B cell (primary cell): ENCODE measurements at regions of chr4 and their contacts with region 1.

Region 1: GRCh38 chr4:48578132-48578968 is 88.3 kb downstream of the ZAR1 start:
- DNase-seq: peak; percentile 70
- ATAC-seq: peak; percentile 86
- H3K4me3 ChIP-seq: no peak overlapping the region
- H3K4me3 Mint-ChIP-seq: no peak overlapping the region
- H3K27ac ChIP-seq: peak overlapping the region in 1 of 2 donors; percentile 2
- H3K27ac Mint-ChIP-seq: no peak overlapping the region
- H3K4me1 ChIP-seq: no peaks in the 10 kb centered on the region
- H3K4me1 Mint-ChIP-seq: peaks cover 1% of the 10 kb centered on the region
- H3K27me3 ChIP-seq: no peaks in the 10 kb centered on the region
- H3K27me3 Mint-ChIP-seq: no peaks in the 10 kb centered on the region
- CTCF ChIP-seq: peak; percentile 94

Region 2: GRCh38 chr4:48008021-48008596 is 570.2 kb before region 1 on chr4:
- CTCF ChIA-PET with region 1: no interaction called
- POLR2A ChIA-PET with region 1: no interaction called
- intact Hi-C with region 1: no loop called
- DNase-seq: no peak
- ATAC-seq: no peak
- H3K4me3 ChIP-seq: no peak overlapping the region
- H3K4me3 Mint-ChIP-seq: no peak overlapping the region
- H3K27ac ChIP-seq: no peak overlapping the region
- H3K27ac Mint-ChIP-seq: no peak overlapping the region
- H3K4me1 ChIP-seq: no peaks in the 10 kb centered on the region
- H3K4me1 Mint-ChIP-seq: no peaks in the 10 kb centered on the region
- H3K27me3 ChIP-seq: peaks cover 0 to 8% (median 4%) of the 10 kb centered on the region in 4 experiments
- H3K27me3 Mint-ChIP-seq: peaks cover 17% of the 10 kb centered on the region
- CTCF ChIP-seq: no peak

Region 3: GRCh38 chr4:48594180-48594579 is 15.8 kb after region 1 on chr4:
- CTCF ChIA-PET with region 1: interaction called, 19 read pairs
- POLR2A ChIA-PET with region 1: no interaction called
- intact Hi-C with region 1: no loop called
- DNase-seq: no peak
- ATAC-seq: no peak
- H3K4me3 ChIP-seq: no peak overlapping the region
- H3K4me3 Mint-ChIP-seq: no peak overlapping the region
- H3K27ac ChIP-seq: no peak overlapping the region
- H3K27ac Mint-ChIP-seq: no peak overlapping the region
- H3K4me1 ChIP-seq: no peaks in the 10 kb centered on the region
- H3K4me1 Mint-ChIP-seq: no peaks in the 10 kb centered on the region
- H3K27me3 ChIP-seq: no peaks in the 10 kb centered on the region
- H3K27me3 Mint-ChIP-seq: no peaks in the 10 kb centered on the region
- CTCF ChIP-seq: no peak

Region 4: DNA sequence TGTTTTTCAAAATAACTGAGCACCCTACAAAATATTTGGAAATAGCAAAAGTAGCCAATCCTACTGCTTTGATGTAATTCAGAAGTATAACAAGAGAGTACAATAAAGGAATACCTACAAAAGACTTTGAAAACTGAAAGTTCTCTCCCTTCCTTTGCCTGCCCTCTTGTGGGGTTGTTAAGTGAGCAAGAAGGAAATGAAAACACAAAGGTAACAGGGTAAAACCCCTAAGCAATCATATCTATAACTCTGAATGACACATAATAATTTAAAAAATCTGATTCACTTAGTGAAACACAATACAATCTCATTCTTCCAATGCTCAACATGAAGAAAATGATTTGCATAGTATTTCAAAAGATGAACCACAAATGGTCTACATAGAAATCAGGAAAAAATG is 103.5 kb after region 1 on chr4:
- CTCF ChIA-PET with region 1: interaction called, 36 read pairs
- POLR2A ChIA-PET with region 1: no interaction called
- intact Hi-C with region 1: loop called (anchors 1 kb)
- DNase-seq: peak; percentile 46
- ATAC-seq: no peak
- H3K4me3 ChIP-seq: no peak overlapping the region
- H3K4me3 Mint-ChIP-seq: no peak overlapping the region
- H3K27ac ChIP-seq: peak overlapping the region in 1 of 2 donors; percentile 16
- H3K27ac Mint-ChIP-seq: peak overlapping the region; percentile 37
- H3K4me1 ChIP-seq: peaks cover 6 to 20% of the 10 kb centered on the region in 2 donors
- H3K4me1 Mint-ChIP-seq: peaks cover 42% of the 10 kb centered on the region
- H3K27me3 ChIP-seq: no peaks in the 10 kb centered on the region
- H3K27me3 Mint-ChIP-seq: no peaks in the 10 kb centered on the region
- CTCF ChIP-seq: peak; percentile 54

Region 5: DNA sequence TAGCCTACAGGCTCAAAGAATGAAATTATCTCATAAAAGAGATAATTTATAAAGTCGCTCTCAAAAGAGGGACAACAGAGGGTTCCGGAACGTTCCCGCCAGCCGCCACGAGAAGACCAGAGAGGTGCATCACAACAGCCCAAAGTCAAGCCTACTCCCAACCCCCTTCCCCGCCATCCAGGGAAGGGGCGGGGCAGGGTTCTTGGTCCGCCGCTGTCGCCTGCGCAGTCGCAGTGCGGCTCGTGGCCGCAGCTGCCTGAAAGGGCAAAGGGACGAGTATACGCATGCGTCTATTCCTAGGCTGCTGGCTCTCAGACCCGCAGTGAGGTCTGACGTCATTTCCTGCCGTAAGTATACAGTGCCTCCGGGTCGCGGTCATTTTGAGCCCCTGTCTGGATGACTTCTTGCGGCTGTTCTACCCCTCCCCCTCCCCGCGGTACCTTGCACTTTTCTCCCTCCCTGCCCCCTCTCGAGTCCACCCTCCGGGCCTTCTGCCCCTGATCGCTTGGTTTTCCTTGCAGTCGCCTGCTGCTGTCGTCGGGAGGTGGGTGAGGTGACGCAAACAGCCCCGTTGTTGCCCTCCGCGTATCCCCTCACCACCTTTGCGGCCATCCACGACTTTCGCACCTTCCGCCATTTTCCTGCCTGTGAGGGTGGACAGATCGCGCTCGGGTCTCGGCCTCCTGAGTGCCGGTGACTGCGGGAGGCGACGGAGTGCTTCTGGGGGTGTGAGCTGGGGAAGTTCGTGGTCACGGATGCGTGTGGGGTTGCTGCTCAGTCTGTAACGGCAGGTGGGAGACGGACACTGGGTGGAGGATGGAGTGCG is 252.6 kb after region 1 on chr4 and contains the start of gene OCIAD1:
- CTCF ChIA-PET with region 1: interaction called, 3 read pairs
- POLR2A ChIA-PET with region 1: no interaction called
- intact Hi-C with region 1: loop called (anchors 5 kb)
- DNase-seq: peak; percentile 99
- ATAC-seq: peak; percentile 95
- H3K4me3 ChIP-seq: peak within 1 kb of the TSS; percentile 81 to 99 (median 93)
- H3K4me3 Mint-ChIP-seq: peak within 1 kb of the TSS; percentile 100
- H3K27ac ChIP-seq: peak within 1 kb of the TSS; percentile 96 to 98
- H3K27ac Mint-ChIP-seq: peak within 1 kb of the TSS; percentile 100
- H3K4me1 ChIP-seq: peaks cover 16% of the 10 kb centered on the region in 2 donors
- H3K4me1 Mint-ChIP-seq: peaks cover 21% of the 10 kb centered on the region
- H3K27me3 ChIP-seq: no peaks in the 10 kb centered on the region
- H3K27me3 Mint-ChIP-seq: no peaks in the 10 kb centered on the region
- CTCF ChIP-seq: no peak
- total RNA-seq, gene OCIAD1: 114 and 119 TPM in 2 replicates

Region 6: GRCh38 chr4:48896845-48897244 is 318.5 kb after region 1 on chr4:
- CTCF ChIA-PET with region 1: interaction called, 10 read pairs
- POLR2A ChIA-PET with region 1: no interaction called
- intact Hi-C with region 1: no loop called
- DNase-seq: no peak
- ATAC-seq: no peak
- H3K4me3 ChIP-seq: no peak overlapping the region
- H3K4me3 Mint-ChIP-seq: no peak overlapping the region
- H3K27ac ChIP-seq: no peak overlapping the region
- H3K27ac Mint-ChIP-seq: no peak overlapping the region
- H3K4me1 ChIP-seq: peaks cover 0 to 6% of the 10 kb centered on the region in 2 donors
- H3K4me1 Mint-ChIP-seq: peaks cover 16% of the 10 kb centered on the region
- H3K27me3 ChIP-seq: no peaks in the 10 kb centered on the region
- H3K27me3 Mint-ChIP-seq: no peaks in the 10 kb centered on the region
- CTCF ChIP-seq: no peak

Region 7: GRCh38 chr4:48906206-48907173 is 328.1 kb after region 1 on chr4 and contains the start of gene OCIAD2:
- CTCF ChIA-PET with region 1: interaction called, 42 read pairs
- POLR2A ChIA-PET with region 1: no interaction called
- intact Hi-C with region 1: loop called (anchors 1 kb)
- DNase-seq: peak; percentile 88
- ATAC-seq: peak; percentile 97
- H3K4me3 ChIP-seq: peak within 1 kb of the TSS; percentile 36 to 80 (median 71)
- H3K4me3 Mint-ChIP-seq: peak within 1 kb of the TSS; percentile 93
- H3K27ac ChIP-seq: peak within 1 kb of the TSS; percentile 58 to 82
- H3K27ac Mint-ChIP-seq: peak within 1 kb of the TSS; percentile 86
- H3K4me1 ChIP-seq: peaks cover 16 to 20% of the 10 kb centered on the region in 2 donors
- H3K4me1 Mint-ChIP-seq: peaks cover 27% of the 10 kb centered on the region
- H3K27me3 ChIP-seq: no peaks in the 10 kb centered on the region
- H3K27me3 Mint-ChIP-seq: no peaks in the 10 kb centered on the region
- CTCF ChIP-seq: peak; percentile 51
- total RNA-seq, gene OCIAD2: 37.0 and 39.3 TPM in 2 replicates

Region 8: DNA sequence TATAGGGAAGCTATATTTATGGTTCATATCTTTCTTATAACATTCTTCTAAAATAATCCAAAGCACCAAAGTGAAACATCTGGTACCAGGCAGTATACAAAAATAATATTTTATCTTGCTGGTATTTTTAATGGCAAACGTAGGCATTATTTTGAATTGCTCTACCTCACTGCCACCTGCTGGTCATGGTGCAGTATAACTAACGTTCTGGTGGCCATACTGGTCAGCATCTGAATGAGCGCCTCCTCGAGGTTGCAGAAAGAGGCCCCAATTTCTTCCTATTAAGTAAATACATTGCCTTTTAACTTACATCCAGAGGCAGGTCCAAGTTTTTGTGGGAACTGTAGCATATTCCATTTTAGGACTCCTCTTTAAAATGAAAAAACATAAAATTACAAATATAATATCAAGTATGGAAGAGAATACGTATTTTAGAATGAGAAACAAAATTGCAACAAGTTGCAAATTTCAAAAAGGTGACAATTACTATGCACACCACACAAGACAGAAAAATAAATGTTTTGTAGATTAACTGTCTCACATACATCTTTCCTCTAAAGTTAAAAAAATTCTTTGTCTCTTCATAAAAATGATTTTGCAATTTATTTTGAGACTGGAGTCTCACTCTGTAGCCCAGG is 384.8 kb after region 1 on chr4:
- CTCF ChIA-PET with region 1: interaction called, 94 read pairs
- POLR2A ChIA-PET with region 1: interaction called, 4 read pairs
- intact Hi-C with region 1: loop called (anchors 1 kb)
- DNase-seq: peak; percentile 80
- ATAC-seq: peak; percentile 96
- H3K4me3 ChIP-seq: no peak overlapping the region
- H3K4me3 Mint-ChIP-seq: no peak overlapping the region
- H3K27ac ChIP-seq: no peak overlapping the region
- H3K27ac Mint-ChIP-seq: no peak overlapping the region
- H3K4me1 ChIP-seq: no peaks in the 10 kb centered on the region
- H3K4me1 Mint-ChIP-seq: no peaks in the 10 kb centered on the region
- H3K27me3 ChIP-seq: no peaks in the 10 kb centered on the region
- H3K27me3 Mint-ChIP-seq: peaks cover 12% of the 10 kb centered on the region
- CTCF ChIP-seq: peak; percentile 99